Activated CD4-positive, alpha-beta T cell treated with anti-CD3 and anti-CD28 coated beads for 36 hours (primary cell): ENCODE measurements at regions of chr15 and their contacts with region 1.

Region 1: GRCh38 chr15:89278307-89278706 is 34.5 kb downstream of the FANCI start:
- DNase-seq: no peak
- ATAC-seq: peak; percentile 47
- H3K4me3 Mint-ChIP-seq: no peak overlapping the region
- H3K27ac Mint-ChIP-seq: no peak overlapping the region
- H3K4me1 Mint-ChIP-seq: peaks cover 8% of the 10 kb centered on the region
- H3K27me3 Mint-ChIP-seq: no peaks in the 10 kb centered on the region

Region 2: GRCh38 chr15:88995449-88995848 is 282.9 kb before region 1 on chr15:
- CTCF ChIA-PET with region 1: no interaction called
- POLR2A ChIA-PET with region 1: no interaction called
- intact Hi-C with region 1: no loop called
- DNase-seq: no peak
- ATAC-seq: no peak
- H3K4me3 Mint-ChIP-seq: no peak overlapping the region
- H3K27ac Mint-ChIP-seq: no peak overlapping the region
- H3K4me1 Mint-ChIP-seq: no peaks in the 10 kb centered on the region
- H3K27me3 Mint-ChIP-seq: peaks cover 2% of the 10 kb centered on the region

Region 3: DNA sequence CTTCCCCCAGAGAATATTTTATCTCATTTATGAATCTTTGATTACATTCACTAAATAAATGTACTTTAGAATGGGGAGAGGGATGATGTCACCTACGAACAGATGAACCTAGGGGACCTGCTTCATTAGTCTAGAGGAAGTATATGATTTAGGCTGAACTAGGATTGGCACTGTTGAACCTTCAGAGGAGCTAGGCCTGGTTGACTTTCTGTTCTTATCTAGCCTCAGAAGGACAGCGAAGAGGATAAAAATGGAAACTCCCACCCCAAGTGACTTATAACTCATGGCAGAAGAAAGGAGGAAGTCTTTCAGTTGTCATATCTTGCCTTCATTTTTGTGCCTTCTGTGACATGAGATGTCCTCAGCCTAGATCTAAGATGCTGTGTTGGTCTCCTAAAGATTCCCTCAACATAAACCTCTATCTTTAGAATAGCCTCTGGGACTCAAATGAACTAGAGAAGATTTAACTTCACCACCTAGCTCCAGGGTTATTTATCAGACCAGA is 13.7 kb after region 1 on chr15:
- CTCF ChIA-PET with region 1: interaction called, 15 read pairs
- POLR2A ChIA-PET with region 1: no interaction called
- intact Hi-C with region 1: no loop called
- DNase-seq: no peak
- ATAC-seq: no peak
- H3K4me3 Mint-ChIP-seq: no peak overlapping the region
- H3K27ac Mint-ChIP-seq: no peak overlapping the region
- H3K4me1 Mint-ChIP-seq: no peaks in the 10 kb centered on the region
- H3K27me3 Mint-ChIP-seq: no peaks in the 10 kb centered on the region

Region 4: DNA sequence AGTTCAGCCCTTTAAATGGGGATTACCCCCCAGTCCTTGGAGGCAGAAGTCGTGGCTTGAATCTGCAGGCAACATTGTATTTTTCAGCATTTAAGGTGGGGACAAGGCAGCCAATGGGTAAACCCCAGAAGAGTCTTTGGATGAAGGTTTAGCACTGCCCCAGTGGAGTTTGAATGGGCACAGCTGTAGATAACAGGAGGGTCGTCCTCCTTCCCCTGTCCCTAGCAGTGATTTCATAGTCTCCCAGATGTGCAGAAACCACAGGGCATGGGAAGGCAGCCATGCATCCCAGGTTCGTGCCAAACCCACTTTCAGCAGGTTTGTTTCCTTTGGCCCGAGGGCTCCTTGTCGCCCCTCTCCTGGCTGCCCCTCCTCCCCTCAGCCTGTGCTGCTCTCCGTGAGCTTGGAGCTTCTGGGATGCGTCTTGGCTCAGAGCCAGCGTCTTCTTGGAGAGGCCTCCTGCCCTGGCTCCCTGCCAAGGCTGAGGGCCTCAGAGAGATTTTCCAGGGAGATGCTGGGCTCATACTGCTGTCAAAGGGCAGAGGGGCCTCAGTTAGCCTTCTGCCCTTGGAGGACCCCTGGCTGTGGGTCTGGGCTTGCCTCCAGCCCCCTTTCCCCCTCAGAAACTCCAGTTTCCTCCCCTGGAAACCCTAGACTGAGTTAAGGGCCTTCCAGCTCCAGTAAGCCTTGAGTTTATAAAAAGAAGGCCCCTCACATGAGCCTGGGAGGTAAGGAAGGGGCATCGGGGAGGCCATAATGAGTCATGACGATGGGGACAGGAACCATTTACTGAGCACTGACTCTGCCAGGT is 105.3 kb after region 1 on chr15:
- CTCF ChIA-PET with region 1: no interaction called
- POLR2A ChIA-PET with region 1: no interaction called
- intact Hi-C with region 1: no loop called
- DNase-seq: no peak
- ATAC-seq: no peak
- H3K4me3 Mint-ChIP-seq: no peak overlapping the region
- H3K27ac Mint-ChIP-seq: no peak overlapping the region
- H3K4me1 Mint-ChIP-seq: no peaks in the 10 kb centered on the region
- H3K27me3 Mint-ChIP-seq: peaks cover 29% of the 10 kb centered on the region

Region 5: GRCh38 chr15:89587952-89588351 is 309.6 kb after region 1 on chr15:
- CTCF ChIA-PET with region 1: no interaction called
- POLR2A ChIA-PET with region 1: no interaction called
- intact Hi-C with region 1: no loop called
- DNase-seq: no peak
- ATAC-seq: no peak
- H3K4me3 Mint-ChIP-seq: no peak overlapping the region
- H3K27ac Mint-ChIP-seq: no peak overlapping the region
- H3K4me1 Mint-ChIP-seq: no peaks in the 10 kb centered on the region
- H3K27me3 Mint-ChIP-seq: no peaks in the 10 kb centered on the region

Region 6: DNA sequence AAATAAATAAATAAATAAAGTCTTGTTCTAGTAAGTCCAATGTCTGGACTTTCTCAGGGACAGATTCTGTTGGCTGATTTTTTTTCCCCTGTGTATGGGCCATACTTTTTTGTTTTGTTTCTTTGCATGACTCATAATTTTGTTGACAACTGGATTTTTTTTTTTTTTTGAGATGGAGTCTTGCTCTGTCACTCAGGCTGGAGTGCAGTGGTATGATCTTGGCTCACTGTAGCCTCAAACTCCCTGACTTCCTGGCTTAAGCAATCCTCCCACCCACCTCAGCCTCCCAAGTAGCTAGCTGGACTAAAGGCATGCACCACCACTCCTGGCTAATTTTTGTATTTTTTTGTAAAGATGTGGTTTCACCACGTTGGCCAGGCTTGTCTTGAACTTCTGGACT is 335.9 kb after region 1 on chr15:
- CTCF ChIA-PET with region 1: no interaction called
- POLR2A ChIA-PET with region 1: no interaction called
- intact Hi-C with region 1: loop called in 1 of 2 experiments (anchors 10 kb)
- DNase-seq: no peak
- ATAC-seq: no peak
- H3K4me3 Mint-ChIP-seq: no peak overlapping the region
- H3K27ac Mint-ChIP-seq: no peak overlapping the region
- H3K4me1 Mint-ChIP-seq: no peaks in the 10 kb centered on the region
- H3K27me3 Mint-ChIP-seq: no peaks in the 10 kb centered on the region

Region 7: GRCh38 chr15:89828241-89829082 is 550.2 kb after region 1 on chr15:
- CTCF ChIA-PET with region 1: no interaction called
- POLR2A ChIA-PET with region 1: no interaction called
- intact Hi-C with region 1: no loop called
- DNase-seq: no peak
- ATAC-seq: no peak
- H3K4me3 Mint-ChIP-seq: no peak overlapping the region
- H3K27ac Mint-ChIP-seq: no peak overlapping the region
- H3K4me1 Mint-ChIP-seq: no peaks in the 10 kb centered on the region
- H3K27me3 Mint-ChIP-seq: no peaks in the 10 kb centered on the region